AG04450 (cell line): ENCODE measurements at regions of chr3 and their contacts with region 1.

Region 1: DNA sequence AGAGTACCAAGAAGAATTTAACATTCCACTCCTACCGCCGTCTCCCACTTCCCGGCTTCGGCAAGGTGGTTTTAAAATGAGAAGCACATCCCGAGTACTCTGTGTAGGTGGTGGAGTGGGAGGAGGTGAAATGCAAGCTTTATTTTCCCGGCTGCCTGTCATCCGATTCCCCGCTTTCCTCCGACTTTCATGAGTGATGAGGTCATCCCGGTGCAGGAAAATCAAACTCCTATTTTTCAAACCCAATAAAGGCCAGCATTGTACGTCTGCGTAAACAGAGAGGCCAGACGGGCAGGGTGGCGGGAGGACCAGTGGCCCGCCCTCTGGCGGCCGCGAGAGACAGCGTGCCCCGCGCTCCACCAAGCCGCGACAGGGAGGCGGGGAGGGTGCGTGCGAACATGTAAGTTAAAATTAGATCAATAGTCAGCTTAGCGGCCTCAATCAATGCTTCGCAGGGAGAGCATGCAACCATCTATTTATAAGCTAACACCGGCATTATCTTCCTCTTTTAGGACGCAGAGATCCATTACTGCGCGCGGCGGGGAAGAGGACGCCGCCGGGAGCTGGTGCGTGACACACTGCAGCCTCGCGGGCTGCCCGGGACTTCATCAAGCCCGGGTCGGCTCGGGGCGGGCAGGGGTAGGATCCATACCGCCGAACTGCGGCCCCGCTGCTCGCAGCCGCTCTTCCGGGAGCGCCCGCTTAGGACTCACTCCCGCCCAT is 163.3 kb downstream of the CD47 start:
- DNase-seq: peak; percentile 18
- H3K4me3 ChIP-seq: peak overlapping the region; percentile 66
- H3K27ac ChIP-seq: no peak overlapping the region
- H3K27me3 ChIP-seq: no peaks in the 10 kb centered on the region
- CTCF ChIP-seq: peak; percentile 93

Region 2: DNA sequence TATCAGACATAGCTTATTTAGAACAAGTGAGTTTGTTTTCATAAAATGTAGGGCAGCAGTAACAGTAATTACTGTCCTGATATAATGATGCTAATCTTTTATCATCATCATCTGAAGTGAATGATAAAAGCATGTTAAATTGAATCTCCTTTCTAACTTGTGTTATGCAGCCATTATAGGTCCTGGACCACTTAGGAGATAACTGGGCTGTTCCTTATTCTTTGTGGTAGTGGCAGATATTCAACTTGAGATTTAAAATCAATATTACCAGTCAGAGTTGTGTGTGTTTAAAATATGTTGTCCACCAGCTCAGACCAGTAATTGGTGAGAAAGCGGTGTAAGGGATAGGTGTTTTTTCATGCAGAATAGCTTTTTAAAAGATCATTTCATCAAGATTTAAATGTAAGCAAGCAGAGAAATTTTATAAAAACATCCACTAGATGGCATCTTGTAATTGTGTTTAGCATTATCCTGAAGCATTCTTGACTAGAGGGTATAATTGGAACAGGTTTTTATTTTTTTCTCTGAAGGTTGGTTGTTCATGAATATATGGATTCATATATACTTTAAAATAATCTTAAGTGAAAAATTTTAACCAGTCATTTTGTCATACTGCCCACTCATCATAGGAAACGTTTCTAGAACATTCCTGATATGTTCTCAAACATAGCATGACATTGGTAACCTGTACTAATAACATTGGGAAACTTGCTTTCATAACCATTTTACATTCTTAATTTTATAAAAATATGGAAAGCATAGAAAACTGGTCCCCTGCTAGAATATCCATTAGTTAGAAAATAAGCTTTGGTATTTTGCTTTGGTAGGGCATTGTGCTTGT is 250.8 kb before region 1 on chr3:
- CTCF ChIA-PET with region 1: interaction called, 41 read pairs
- POLR2A ChIA-PET with region 1: no interaction called
- DNase-seq: no peak
- H3K4me3 ChIP-seq: no peak overlapping the region
- H3K27ac ChIP-seq: no peak overlapping the region
- H3K27me3 ChIP-seq: no peaks in the 10 kb centered on the region
- CTCF ChIP-seq: peak; percentile 56

Region 3: GRCh38 chr3:107897471-107898061 is 30.0 kb before region 1 on chr3:
- CTCF ChIA-PET with region 1: interaction called, 14 read pairs
- POLR2A ChIA-PET with region 1: no interaction called
- DNase-seq: no peak
- H3K4me3 ChIP-seq: no peak overlapping the region
- H3K27ac ChIP-seq: no peak overlapping the region
- H3K27me3 ChIP-seq: peaks cover 7% of the 10 kb centered on the region
- CTCF ChIP-seq: no peak

Region 4: DNA sequence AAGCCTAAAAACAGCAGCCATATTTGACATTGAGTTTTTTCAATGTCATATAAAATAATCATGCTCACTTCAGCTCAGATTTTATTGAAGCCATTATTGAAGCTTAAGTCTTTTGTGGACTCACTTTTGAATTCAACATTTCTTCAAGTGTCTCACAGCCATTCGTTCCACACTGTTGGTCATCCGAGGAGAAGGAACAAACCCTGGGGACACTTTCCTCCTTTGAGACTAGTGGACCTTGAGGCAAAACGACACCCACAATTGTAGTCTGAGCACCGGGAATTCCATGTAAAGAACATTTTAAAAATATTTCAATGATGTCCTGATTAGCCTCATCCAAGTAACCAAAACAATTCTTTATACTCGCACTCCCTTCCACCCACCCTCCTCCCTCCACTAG is 11.4 kb before region 1 on chr3:
- CTCF ChIA-PET with region 1: interaction called, 23 read pairs
- POLR2A ChIA-PET with region 1: no interaction called
- DNase-seq: no peak
- H3K4me3 ChIP-seq: no peak overlapping the region
- H3K27ac ChIP-seq: no peak overlapping the region
- H3K27me3 ChIP-seq: peaks cover 11% of the 10 kb centered on the region
- CTCF ChIP-seq: no peak

Region 5: DNA sequence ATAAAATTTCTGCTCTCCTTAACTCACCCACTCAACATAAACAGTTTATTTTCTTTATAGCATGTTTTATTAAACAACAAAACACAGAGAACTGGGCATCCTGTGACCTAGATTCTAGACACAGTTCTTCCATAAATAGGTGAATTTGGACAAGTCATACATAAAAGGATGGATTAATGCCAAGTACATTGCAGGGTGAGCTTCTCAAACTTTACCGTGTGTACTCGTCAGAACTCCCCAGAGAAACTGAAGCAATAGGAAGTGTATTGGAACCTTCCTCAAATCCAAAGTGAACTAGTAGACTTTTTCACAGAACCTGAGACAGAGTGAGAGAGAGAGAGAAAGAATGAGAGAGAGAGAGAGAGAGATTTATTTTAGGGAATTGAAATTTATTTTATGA is 23.6 kb after region 1 on chr3:
- CTCF ChIA-PET with region 1: interaction called, 14 read pairs
- POLR2A ChIA-PET with region 1: no interaction called
- DNase-seq: no peak
- H3K4me3 ChIP-seq: no peak overlapping the region
- H3K27ac ChIP-seq: no peak overlapping the region
- H3K27me3 ChIP-seq: no peaks in the 10 kb centered on the region
- CTCF ChIP-seq: no peak

Region 6: GRCh38 chr3:108221911-108222852 is 294.7 kb after region 1 on chr3 and contains the start of gene IFT57:
- CTCF ChIA-PET with region 1: interaction called, 15 read pairs
- POLR2A ChIA-PET with region 1: no interaction called
- DNase-seq: peak; percentile 93
- H3K4me3 ChIP-seq: peak within 1 kb of the TSS; percentile 77
- H3K27ac ChIP-seq: peak within 1 kb of the TSS; percentile 71
- H3K27me3 ChIP-seq: no peaks in the 10 kb centered on the region
- CTCF ChIP-seq: no peak
- polyA plus RNA-seq, gene IFT57: 62.6 and 84.0 TPM in 2 replicates